Ascending aorta (tissue), 2 donors: ENCODE measurements at regions of chr6 and their contacts with region 1.

Region 1: DNA sequence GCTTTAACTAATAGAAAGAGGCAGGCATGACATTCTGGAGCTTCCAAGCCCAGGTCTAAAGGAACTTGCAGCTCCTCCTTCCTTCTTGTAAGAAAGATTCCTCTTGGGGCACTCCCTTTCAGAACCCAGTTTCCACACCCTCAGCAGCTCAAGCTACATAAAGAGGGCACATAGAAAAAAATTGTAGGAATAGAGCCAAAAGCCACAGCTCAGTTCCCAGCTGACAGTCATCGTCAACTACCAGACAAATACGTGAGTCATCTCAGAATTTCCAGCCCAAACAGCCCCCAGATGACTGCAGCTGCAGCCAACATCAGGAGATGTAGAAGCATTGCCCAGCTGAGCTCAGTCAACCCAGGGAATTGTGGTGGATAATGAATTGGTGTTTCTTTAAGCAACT is 349.8 kb upstream of the ARID1B start:
- DNase-seq: peak; percentile 51 to 84
- H3K4me3 ChIP-seq: no peak overlapping the region
- H3K27ac ChIP-seq: peak overlapping the region; percentile 31 to 60
- H3K4me1 ChIP-seq: no peaks in the 10 kb centered on the region
- H3K27me3 ChIP-seq: no peaks in the 10 kb centered on the region
- CTCF ChIP-seq: no peak

Region 2: GRCh38 chr6:156378853-156379252 is 48.5 kb before region 1 on chr6:
- intact Hi-C with region 1: loop called (anchors 5 kb)
- DNase-seq: no peak
- H3K4me3 ChIP-seq: no peak overlapping the region
- H3K27ac ChIP-seq: peak overlapping the region; percentile 27 to 38
- H3K4me1 ChIP-seq: peaks cover 0 to 14% of the 10 kb centered on the region in 2 donors
- H3K27me3 ChIP-seq: no peaks in the 10 kb centered on the region
- CTCF ChIP-seq: no peak

Region 3: DNA sequence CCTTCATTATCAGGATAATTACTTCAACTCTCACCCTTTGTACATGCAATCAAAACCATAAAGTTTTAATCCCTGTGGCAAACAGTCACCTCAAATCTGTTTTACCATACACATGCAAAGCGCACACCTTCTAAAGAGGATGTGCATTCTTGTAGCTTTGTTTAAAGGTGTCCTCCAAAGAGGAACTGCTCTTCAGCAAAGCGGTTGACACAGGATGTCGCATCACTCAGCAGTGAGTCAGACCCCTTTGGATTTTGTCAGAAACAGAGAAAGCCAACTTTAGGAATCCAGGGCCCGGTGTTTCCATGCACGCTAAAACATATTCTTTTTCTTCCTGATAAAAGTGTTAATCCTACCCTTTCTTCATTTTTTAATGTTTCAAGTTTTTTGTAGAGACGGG is 81.6 kb after region 1 on chr6:
- intact Hi-C with region 1: no loop called
- DNase-seq: no peak
- H3K4me3 ChIP-seq: no peak overlapping the region
- H3K27ac ChIP-seq: no peak overlapping the region
- H3K4me1 ChIP-seq: no peaks in the 10 kb centered on the region
- H3K27me3 ChIP-seq: no peaks in the 10 kb centered on the region
- CTCF ChIP-seq: no peak